ENCODE measurements at regions of chr2 and their contacts with region 1.

Region 1: DNA sequence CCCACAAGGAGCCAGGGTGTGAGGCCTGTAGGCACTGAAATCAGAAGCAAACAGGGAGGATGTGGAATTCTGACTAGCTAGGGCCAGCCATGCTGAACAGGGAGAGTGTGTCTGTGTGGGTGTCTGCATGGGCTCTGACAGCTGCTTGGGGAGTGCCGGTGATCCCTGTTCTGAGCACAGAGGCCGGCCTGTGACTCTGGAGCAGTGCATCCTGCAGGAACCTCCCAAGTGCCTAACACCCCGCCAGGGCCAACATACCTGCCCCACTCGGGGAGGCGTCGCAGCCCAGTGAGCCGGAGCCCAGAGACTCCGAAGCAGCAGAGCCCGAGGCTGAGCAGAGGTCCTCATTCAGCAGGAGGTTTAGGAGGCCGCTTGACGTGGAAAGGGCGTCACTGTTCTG is 11.5 kb upstream of the HES6 start:
- DNase-seq: no peak
- H3K4me3 ChIP-seq: no peak overlapping the region
- CTCF ChIP-seq: no peak
- POLR2A ChIP-seq: no peak

Region 2: DNA sequence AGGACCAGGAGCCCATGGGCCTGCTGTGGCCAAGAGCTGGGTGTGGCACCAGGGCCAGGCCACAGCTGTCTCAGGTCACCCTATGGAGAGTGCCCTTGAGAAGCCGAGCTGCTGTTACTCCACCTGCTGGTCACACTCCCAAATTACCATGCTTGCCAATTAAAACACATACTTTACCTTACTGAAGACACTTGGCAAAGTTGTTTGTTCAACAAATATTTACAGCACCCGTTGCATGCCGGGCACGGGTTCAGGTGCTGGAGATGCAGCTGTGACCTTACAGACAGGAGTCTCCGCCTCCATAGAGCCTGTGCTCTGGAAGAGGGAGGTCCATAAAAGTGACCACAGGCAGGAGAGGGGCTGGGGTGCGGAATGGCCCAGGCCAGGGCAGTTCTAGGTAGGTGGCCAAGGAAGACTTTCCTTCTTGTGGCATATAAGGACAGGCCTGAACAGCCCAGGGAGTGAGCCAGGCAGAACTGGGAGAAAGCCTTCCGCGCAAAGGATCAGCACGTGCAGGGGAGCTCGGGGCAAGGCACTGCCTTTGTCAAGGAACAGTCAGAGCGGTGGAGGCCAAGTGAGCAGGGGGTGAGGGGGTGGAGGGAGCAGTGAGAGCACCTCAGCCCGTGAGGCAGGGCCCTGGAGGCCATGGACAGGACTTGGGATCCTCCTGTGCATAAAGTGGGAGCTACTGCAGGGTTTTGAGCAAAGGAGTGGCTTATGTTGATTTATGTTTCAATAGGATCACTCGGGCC is 476.4 kb before region 1 on chr2:
- intact Hi-C with region 1: no loop called
- DNase-seq: peak in 1 of 2 donors; percentile 31
- H3K4me3 ChIP-seq: no peak overlapping the region
- CTCF ChIP-seq: no peak
- POLR2A ChIP-seq: no peak

Region 3: DNA sequence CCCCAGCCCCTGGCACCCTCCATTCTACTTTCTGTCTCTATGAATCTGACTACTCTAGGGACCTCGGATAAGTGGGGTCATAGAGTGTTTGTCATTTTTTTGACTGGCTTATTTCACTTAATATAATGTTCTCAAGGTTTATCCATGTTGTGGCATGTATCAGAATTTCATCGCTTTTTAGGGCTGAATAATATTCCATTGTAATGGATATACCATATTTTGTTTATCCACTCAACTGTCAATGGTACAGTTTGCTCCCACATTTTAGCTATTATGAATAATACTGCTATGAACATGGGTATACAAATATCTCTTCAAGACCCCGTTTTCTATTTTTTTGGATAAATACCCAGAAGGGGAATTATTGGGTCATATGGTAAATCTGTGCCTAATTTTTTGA is 76.4 kb after region 1 on chr2:
- intact Hi-C with region 1: loop called (anchors 1 kb)
- DNase-seq: no peak
- H3K4me3 ChIP-seq: no peak overlapping the region
- CTCF ChIP-seq: no peak
- POLR2A ChIP-seq: no peak